Gastrocnemius medialis (tissue), 4 donors: ENCODE measurements at regions of chr3 and their contacts with region 1.

Region 1: GRCh38 chr3:190321789-190322603 is at the start of gene CLDN1:
- DNase-seq: peak; percentile 47 to 57
- ATAC-seq: peak; percentile 83 to 92
- H3K4me3 ChIP-seq: peak within 1 kb of the TSS; percentile 54 to 86 (median 60)
- H3K27ac ChIP-seq: no peak within 1 kb of the TSS
- H3K4me1 ChIP-seq: peaks cover 4 to 9% of the 10 kb centered on the region in 2 donors
- H3K27me3 ChIP-seq: peaks cover 0 to 5% (median 0%) of the 10 kb centered on the region in 3 donors
- CTCF ChIP-seq: peak; percentile 76 to 91 (median 91)
- POLR2A ChIP-seq: no peak
- total RNA-seq, gene CLDN1: 0.25 to 1.00 (median 0.36) TPM in 3 of 4 donors, not detected in the other

Region 2: GRCh38 chr3:189641776-189642175 is 680.2 kb before region 1 on chr3:
- in situ Hi-C with region 1: no loop called
- intact Hi-C with region 1: no loop called
- DNase-seq: no peak
- ATAC-seq: no peak
- H3K4me3 ChIP-seq: no peak overlapping the region
- H3K27ac ChIP-seq: no peak overlapping the region
- H3K4me1 ChIP-seq: peaks cover 19 to 20% of the 10 kb centered on the region in 2 donors
- H3K27me3 ChIP-seq: no peaks in the 10 kb centered on the region
- CTCF ChIP-seq: no peak
- POLR2A ChIP-seq: no peak

Region 3: GRCh38 chr3:189967254-189967865 is 354.6 kb before region 1 on chr3:
- in situ Hi-C with region 1: loop called (anchors 5 to 10 kb)
- intact Hi-C with region 1: no loop called
- DNase-seq: no peak
- ATAC-seq: peak in 1 of 2 donors; percentile 41
- H3K4me3 ChIP-seq: no peak overlapping the region
- H3K27ac ChIP-seq: no peak overlapping the region
- H3K4me1 ChIP-seq: no peaks in the 10 kb centered on the region
- H3K27me3 ChIP-seq: no peaks in the 10 kb centered on the region
- CTCF ChIP-seq: peak; percentile 57 to 86 (median 64)
- POLR2A ChIP-seq: no peak

Region 4: DNA sequence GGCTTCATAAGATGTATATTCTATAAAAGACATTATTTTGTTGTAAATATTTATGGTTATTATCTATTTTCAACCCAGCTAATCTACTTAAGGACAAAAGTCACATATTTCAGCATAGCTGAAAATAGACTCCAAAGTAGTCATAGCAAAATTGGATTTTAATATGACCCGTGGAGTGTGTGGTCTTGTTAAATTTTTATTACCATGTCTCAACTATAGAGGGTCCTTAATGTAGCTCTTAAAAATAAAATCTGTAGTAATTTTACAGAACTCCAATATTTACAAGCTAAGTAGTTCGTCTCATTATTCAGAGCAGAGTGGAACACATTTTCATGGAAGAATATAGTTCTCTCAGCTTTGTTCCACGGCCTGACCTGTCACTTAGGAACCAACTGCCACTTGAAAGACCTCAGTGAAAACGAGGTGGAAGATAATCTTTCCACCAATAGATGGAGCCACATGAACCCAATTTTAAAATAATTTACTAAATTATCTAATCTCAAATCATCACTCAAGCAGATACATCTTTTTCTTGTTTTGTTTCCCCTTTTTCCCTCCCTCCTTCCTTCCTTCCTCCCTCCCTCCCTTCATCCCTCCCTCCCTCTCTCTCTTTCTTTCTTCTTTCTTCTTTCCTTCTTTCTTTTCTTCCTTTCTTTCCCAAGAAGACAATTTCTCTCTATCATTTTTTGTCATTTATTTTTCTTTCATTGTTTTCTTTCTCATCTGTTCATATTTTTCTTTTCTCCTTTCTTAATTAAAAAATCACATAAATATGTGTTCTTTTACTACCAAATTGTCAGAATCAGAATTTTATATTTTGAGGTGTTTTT is 96.9 kb before region 1 on chr3:
- in situ Hi-C with region 1: loop called in 2 of 4 experiments (anchors 10 kb)
- intact Hi-C with region 1: loop called (anchors 1 kb)
- DNase-seq: no peak
- ATAC-seq: no peak
- H3K4me3 ChIP-seq: no peak overlapping the region
- H3K27ac ChIP-seq: no peak overlapping the region
- H3K4me1 ChIP-seq: no peaks in the 10 kb centered on the region
- H3K27me3 ChIP-seq: no peaks in the 10 kb centered on the region
- CTCF ChIP-seq: peak in 3 of 5 experiments; percentile 12 to 38 (median 13)
- POLR2A ChIP-seq: no peak

Region 5: DNA sequence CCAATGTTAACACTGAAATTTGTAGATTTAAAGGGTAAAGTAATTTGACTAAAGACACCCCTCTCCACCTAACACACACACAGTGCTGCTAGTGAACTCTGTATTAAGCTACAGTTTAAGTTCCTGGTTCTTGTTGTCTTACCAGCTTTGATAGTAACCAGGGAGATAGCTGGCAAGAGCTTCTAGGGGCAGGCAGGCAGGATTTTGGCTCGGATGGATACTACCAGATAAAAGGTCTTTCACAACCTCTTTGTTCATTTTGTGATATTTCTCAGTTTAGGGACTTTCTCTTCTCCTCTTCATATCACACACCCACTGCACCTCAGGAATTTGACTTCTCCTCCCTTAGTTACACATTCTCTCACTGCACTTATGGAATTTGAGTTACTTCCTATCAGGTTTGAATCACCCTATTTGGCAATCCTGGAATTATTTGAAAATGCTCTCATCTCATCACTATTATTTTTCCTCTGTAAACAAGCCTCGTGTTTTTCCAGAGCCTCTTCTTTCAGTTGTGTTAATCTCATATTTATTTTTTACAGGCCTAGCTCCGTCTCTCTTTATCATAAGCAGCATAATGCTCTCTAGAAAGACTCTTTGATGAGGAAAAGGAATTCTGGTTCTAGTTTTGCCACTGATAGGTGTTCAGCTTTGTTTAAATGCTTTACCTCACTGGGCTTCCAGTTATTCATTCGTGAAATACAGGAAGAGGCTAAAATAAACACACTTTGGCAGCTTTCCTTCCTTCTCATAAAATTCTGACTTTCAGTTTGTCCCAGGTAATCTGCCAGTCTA is 23.2 kb after region 1 on chr3:
- in situ Hi-C with region 1: no loop called
- intact Hi-C with region 1: no loop called
- DNase-seq: no peak
- ATAC-seq: no peak
- H3K4me3 ChIP-seq: no peak overlapping the region
- H3K27ac ChIP-seq: no peak overlapping the region
- H3K4me1 ChIP-seq: no peaks in the 10 kb centered on the region
- H3K27me3 ChIP-seq: no peaks in the 10 kb centered on the region
- CTCF ChIP-seq: no peak
- POLR2A ChIP-seq: no peak